Esophagus muscularis mucosa (tissue), 4 donors: ENCODE measurements at regions of chr22 and their contacts with region 1.

Region 1: GRCh38 chr22:44080936-44081861 is 57.1 kb downstream of the PARVB start:
- DNase-seq: peak; percentile 96
- H3K4me3 ChIP-seq: peak overlapping the region; percentile 12 to 36 (median 30)
- H3K27ac ChIP-seq: no peak overlapping the region
- H3K4me1 ChIP-seq: peaks cover 21 to 26% (median 23%) of the 10 kb centered on the region in 4 donors
- H3K27me3 ChIP-seq: no peaks in the 10 kb centered on the region
- CTCF ChIP-seq: peak; percentile 78 to 90 (median 85)
- EP300 ChIP-seq: no peak
- POLR2A ChIP-seq: no peak

Region 2: DNA sequence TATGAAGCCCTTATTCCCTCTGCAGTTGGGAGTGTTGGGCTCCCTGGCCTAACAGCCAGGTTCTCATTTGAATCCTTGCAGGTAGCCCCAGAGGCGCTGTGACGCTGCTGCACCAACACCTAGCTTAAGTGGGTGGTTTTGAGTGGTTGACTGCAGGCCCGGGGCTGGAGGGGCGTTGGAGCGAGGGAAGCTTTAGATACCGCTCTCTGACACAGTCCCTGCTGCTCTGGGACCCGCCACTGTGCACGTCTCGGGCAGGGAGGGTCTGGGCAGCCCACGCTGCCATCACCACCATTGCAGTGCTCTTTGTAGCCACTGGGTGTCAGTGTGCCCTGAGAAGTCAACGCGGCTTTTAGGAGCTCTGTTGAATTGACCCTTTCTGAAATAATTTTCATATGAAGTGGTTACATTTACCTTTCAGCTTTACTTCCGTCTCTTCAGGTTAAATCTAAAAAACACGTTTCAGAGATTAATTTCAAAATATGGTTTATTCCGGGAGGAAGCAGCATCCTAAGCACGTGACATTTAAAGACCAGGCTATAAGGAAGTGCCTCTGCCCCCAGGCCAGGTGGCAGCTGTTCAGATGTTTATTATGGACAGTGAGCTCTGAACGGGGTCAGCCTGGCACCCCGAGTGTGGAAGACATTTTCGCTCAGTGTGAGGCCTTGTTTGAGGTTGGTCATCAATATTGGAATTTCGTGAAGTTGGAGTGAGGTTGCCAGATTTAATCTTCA is 88.0 kb before region 1 on chr22:
- intact Hi-C with region 1: loop called (anchors 2 kb)
- DNase-seq: no peak
- H3K4me3 ChIP-seq: no peak overlapping the region
- H3K27ac ChIP-seq: no peak overlapping the region
- H3K4me1 ChIP-seq: peaks cover 0 to 18% (median 2%) of the 10 kb centered on the region in 4 donors
- H3K27me3 ChIP-seq: no peaks in the 10 kb centered on the region
- CTCF ChIP-seq: peak; percentile 92 to 97 (median 93)
- EP300 ChIP-seq: no peak
- POLR2A ChIP-seq: no peak

Region 3: DNA sequence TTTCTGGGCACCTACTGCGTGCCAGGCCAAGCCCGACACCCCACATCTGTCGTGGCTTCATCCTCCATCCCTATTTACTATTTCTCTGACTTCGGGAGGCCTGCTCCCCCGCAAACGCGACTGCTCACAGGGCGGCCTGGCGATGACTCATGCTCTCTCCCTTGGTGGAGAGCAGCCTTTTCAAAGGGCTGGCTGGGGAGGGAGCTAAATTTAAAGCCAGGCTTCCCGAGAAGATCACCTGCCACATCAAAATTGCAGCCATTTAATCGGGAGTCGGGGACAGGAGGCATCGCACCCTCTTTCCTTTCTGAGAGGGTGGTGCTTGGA is 256.4 kb after region 1 on chr22:
- intact Hi-C with region 1: loop called (anchors 10 kb)
- DNase-seq: no peak
- H3K4me3 ChIP-seq: no peak overlapping the region
- H3K27ac ChIP-seq: peak overlapping the region in 1 of 4 donors; percentile 6
- H3K4me1 ChIP-seq: peaks cover 9 to 41% (median 32%) of the 10 kb centered on the region in 4 donors
- H3K27me3 ChIP-seq: peaks cover 0 to 10% (median 0%) of the 10 kb centered on the region in 4 donors
- CTCF ChIP-seq: no peak
- EP300 ChIP-seq: no peak
- POLR2A ChIP-seq: no peak

Region 4: GRCh38 chr22:44567846-44568493 is 486.8 kb after region 1 on chr22:
- intact Hi-C with region 1: loop called (anchors 5 kb)
- DNase-seq: no peak
- H3K4me3 ChIP-seq: no peak overlapping the region
- H3K27ac ChIP-seq: no peak overlapping the region
- H3K4me1 ChIP-seq: peaks cover 0 to 3% (median 0%) of the 10 kb centered on the region in 4 donors
- H3K27me3 ChIP-seq: no peaks in the 10 kb centered on the region
- CTCF ChIP-seq: peak; percentile 35 to 49 (median 41)
- EP300 ChIP-seq: no peak
- POLR2A ChIP-seq: no peak

Region 5: GRCh38 chr22:44625981-44626687 is 544.9 kb after region 1 on chr22:
- intact Hi-C with region 1: loop called (anchors 2 kb)
- DNase-seq: no peak
- H3K4me3 ChIP-seq: no peak overlapping the region
- H3K27ac ChIP-seq: no peak overlapping the region
- H3K4me1 ChIP-seq: peaks cover 0 to 5% (median 2%) of the 10 kb centered on the region in 4 donors
- H3K27me3 ChIP-seq: peaks cover 0 to 59% (median 3%) of the 10 kb centered on the region in 4 donors
- CTCF ChIP-seq: peak; percentile 97 to 99 (median 98)
- EP300 ChIP-seq: no peak
- POLR2A ChIP-seq: no peak